CD4-positive, alpha-beta memory T cell (primary cell): ENCODE measurements at regions of chr5 and their contacts with region 1.

Region 1: DNA sequence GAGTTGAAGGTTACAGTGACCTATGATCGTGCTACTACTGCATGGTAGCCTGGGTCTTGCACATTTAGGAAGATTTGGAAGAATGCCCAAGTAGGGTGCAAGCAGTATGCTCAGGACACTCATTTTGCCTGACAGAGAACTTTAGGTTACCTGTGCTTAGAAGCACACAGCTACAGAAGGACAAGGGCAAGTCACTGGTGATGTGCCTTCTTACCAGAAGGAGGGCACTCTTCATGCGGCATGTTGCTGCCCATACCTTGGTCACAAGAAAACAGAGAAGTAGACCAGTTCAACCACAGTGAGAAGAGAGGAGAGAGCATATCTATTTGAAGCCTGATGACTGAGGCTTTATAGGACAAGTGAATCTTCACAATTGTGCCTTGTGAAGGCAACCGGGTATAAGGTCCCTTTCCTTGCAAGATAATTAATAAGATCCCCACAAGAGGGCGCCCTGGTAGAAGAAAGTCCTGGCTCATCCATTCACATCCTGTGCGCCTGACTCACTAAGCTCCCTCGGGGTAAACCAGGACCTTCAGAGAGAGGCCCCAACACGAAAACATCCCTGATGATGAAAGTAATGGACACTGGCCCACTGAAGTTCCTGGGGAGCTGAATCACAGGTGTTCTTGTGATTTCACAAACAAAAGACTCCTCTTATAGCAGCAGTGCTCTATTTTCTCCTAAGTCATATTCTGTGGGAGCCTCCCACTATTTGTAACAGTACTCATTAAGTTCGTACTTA is 38.1 kb upstream of the STARD4 start:
- DNase-seq: peak; percentile 57 to 67 (median 64)
- H3K4me3 ChIP-seq: no peak overlapping the region
- H3K4me3 Mint-ChIP-seq: peak overlapping the region in 2 of 8 donors; percentile 23 to 49
- H3K27ac ChIP-seq: no peak overlapping the region
- H3K27ac Mint-ChIP-seq: no peak overlapping the region
- H3K4me1 ChIP-seq: peaks cover 13% of the 10 kb centered on the region
- H3K4me1 Mint-ChIP-seq: peaks cover 10 to 25% (median 20%) of the 10 kb centered on the region in 4 donors
- H3K27me3 ChIP-seq: no peaks in the 10 kb centered on the region
- H3K27me3 Mint-ChIP-seq: peaks cover 1 to 3% of the 10 kb centered on the region in 2 donors

Region 2: DNA sequence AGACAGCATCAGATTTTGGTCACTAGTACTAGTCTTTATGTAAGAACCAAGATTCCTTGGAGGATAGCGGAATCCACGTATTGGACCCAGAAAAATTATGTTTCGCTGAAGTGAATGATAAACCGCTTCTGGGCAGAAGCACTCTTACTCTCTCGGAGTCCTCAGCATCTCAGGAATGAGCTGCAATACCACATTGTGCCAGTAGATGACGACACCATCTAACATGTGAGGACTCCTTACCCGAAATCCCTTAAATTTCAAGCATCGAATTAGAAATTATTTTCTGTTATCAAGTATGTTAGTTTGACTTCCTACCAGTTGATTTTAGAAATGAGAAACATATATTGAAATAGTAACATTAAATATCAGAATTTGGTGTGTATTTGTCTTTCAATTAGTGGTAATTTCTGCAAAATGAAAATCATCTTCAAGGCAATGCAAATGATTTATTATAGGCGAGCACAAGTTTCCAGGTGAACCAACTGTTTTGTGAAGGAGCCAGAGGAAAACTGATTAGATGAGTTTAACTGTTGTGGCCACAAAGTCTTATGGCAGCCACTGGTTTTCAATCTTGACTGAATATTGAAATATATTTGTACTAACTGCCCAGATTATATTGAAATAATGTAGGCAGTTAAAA is 392.2 kb before region 1 on chr5:
- CTCF ChIA-PET with region 1: interaction called, 3 read pairs
- POLR2A ChIA-PET with region 1: no interaction called
- intact Hi-C with region 1: loop called (anchors 5 kb)
- DNase-seq: peak; percentile 66 to 79 (median 72)
- H3K4me3 ChIP-seq: no peak overlapping the region
- H3K4me3 Mint-ChIP-seq: peak overlapping the region in 1 of 8 donors; percentile 15
- H3K27ac ChIP-seq: no peak overlapping the region
- H3K27ac Mint-ChIP-seq: no peak overlapping the region
- H3K4me1 ChIP-seq: no peaks in the 10 kb centered on the region
- H3K4me1 Mint-ChIP-seq: peaks cover 0 to 6% (median 3%) of the 10 kb centered on the region in 4 donors
- H3K27me3 ChIP-seq: no peaks in the 10 kb centered on the region
- H3K27me3 Mint-ChIP-seq: peaks cover 4 to 7% of the 10 kb centered on the region in 2 donors

Region 3: DNA sequence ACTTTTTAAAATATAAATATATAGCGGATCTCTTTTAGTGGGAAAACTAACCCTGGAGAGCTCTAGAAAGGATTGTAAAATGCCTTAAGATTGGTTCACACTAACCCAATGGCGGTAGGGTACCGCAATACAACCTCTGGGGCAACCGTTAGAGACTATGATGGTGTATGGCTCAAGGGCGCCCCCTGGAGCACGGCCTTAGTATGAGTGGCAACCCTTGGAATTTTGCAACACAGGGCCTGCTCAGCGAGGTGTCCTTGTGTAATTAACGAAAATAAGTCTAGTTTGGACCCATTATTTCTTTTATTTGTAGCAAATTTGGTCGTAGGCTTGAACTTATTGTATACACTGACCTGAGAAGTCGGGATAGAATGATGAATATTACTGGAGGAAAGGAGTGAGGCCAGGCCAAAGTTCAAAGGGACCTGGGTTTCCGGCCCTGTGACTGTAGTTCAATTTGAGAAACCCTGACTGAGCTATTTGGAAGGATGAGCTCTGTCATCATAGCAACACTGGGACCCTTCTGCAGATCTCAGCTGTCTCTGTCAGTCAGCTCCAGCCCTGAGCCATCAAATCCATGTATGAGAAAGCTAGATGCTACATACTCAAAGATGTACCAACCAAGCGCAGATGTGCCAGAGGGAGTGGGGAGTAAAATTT is 271.5 kb before region 1 on chr5:
- CTCF ChIA-PET with region 1: no interaction called
- POLR2A ChIA-PET with region 1: no interaction called
- intact Hi-C with region 1: no loop called
- DNase-seq: peak; percentile 77 to 84 (median 82)
- H3K4me3 ChIP-seq: no peak overlapping the region
- H3K4me3 Mint-ChIP-seq: peak overlapping the region in 3 of 8 donors; percentile 27 to 75 (median 63)
- H3K27ac ChIP-seq: no peak overlapping the region
- H3K27ac Mint-ChIP-seq: peak overlapping the region in 6 of 7 donors; percentile 53 to 94 (median 82)
- H3K4me1 ChIP-seq: peaks cover 57% of the 10 kb centered on the region
- H3K4me1 Mint-ChIP-seq: peaks cover 52 to 79% (median 64%) of the 10 kb centered on the region in 4 donors
- H3K27me3 ChIP-seq: no peaks in the 10 kb centered on the region
- H3K27me3 Mint-ChIP-seq: no peaks in the 10 kb centered on the region

Region 4: DNA sequence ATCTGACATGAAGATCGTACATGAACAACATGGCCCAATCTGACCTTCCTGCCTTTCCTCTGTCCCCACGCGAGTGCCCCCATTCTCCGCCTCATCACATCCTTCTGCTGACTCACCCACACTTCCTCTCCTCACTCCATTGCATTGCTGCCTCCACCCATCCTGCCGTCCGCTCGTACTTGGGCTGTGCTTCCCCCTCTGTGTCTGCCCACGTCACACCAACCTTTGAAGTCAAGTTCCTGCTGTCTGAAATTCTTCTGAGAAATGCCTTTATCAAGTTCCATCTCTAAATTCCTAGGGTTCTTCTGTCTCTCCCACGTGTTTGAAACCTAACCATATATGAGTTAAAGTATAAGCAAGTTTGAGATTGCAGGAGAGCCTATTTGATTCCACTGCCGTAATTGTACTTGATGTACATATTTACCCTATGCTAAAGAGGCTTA is 20.1 kb before region 1 on chr5:
- CTCF ChIA-PET with region 1: interaction called, 19 read pairs
- POLR2A ChIA-PET with region 1: no interaction called
- intact Hi-C with region 1: no loop called
- DNase-seq: peak; percentile 84 to 98 (median 87)
- H3K4me3 ChIP-seq: peak overlapping the region in 1 of 2 donors; percentile 3
- H3K4me3 Mint-ChIP-seq: peak overlapping the region; percentile 31 to 79 (median 66)
- H3K27ac ChIP-seq: peak overlapping the region; percentile 68
- H3K27ac Mint-ChIP-seq: peak overlapping the region; percentile 76 to 98 (median 89)
- H3K4me1 ChIP-seq: peaks cover 18% of the 10 kb centered on the region
- H3K4me1 Mint-ChIP-seq: peaks cover 13 to 17% (median 15%) of the 10 kb centered on the region in 4 donors
- H3K27me3 ChIP-seq: no peaks in the 10 kb centered on the region
- H3K27me3 Mint-ChIP-seq: peaks cover 0 to 1% of the 10 kb centered on the region in 2 donors

Region 5: GRCh38 chr5:111537141-111538024 is 13.1 kb before region 1 on chr5:
- CTCF ChIA-PET with region 1: interaction called, 19 read pairs
- POLR2A ChIA-PET with region 1: no interaction called
- intact Hi-C with region 1: no loop called
- DNase-seq: no peak
- H3K4me3 ChIP-seq: no peak overlapping the region
- H3K4me3 Mint-ChIP-seq: no peak overlapping the region
- H3K27ac ChIP-seq: no peak overlapping the region
- H3K27ac Mint-ChIP-seq: no peak overlapping the region
- H3K4me1 ChIP-seq: no peaks in the 10 kb centered on the region
- H3K4me1 Mint-ChIP-seq: no peaks in the 10 kb centered on the region
- H3K27me3 ChIP-seq: no peaks in the 10 kb centered on the region
- H3K27me3 Mint-ChIP-seq: peaks cover 10 to 17% of the 10 kb centered on the region in 2 donors

Region 6: DNA sequence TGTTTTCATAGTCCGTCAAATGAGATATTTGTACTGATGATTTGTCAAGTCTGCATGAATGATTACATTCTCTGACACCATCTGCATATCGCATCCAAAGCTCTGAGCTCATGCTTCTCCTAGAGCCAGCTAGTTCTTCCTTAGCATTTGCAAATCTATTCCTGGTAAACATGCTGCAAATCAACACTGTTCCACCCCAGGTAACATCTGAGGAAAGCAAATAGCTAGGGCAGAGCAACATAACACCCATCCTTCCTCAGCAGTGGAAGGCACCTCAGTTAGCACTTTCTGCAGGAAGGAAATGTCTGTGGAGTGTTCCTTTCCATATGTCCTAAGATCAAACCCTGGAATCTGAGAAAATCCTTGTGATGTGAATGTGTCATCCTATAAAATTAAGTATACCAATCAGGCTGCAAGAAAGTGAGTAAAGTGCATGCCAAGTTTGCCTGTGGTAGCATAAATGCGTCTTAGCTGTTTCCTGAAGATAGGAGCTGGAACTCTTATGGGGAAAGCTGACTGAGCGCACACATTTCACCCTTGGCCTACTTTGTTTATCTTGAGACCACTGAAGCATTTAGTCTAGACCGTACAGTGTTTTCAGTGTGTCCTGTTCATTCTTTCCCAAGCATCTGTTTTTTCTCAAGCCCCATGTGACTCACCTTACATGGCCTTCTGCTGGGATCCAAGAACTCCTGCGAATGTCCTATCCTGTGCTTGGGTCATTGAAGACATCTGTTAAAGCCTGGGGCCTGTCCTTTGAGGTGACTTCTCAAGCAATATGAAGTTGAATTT is 12.8 kb after region 1 on chr5:
- CTCF ChIA-PET with region 1: interaction called, 15 read pairs
- POLR2A ChIA-PET with region 1: no interaction called
- intact Hi-C with region 1: no loop called
- DNase-seq: no peak
- H3K4me3 ChIP-seq: no peak overlapping the region
- H3K4me3 Mint-ChIP-seq: no peak overlapping the region
- H3K27ac ChIP-seq: no peak overlapping the region
- H3K27ac Mint-ChIP-seq: no peak overlapping the region
- H3K4me1 ChIP-seq: no peaks in the 10 kb centered on the region
- H3K4me1 Mint-ChIP-seq: no peaks in the 10 kb centered on the region
- H3K27me3 ChIP-seq: peaks cover 12% of the 10 kb centered on the region
- H3K27me3 Mint-ChIP-seq: peaks cover 6 to 11% of the 10 kb centered on the region in 2 donors

Region 7: DNA sequence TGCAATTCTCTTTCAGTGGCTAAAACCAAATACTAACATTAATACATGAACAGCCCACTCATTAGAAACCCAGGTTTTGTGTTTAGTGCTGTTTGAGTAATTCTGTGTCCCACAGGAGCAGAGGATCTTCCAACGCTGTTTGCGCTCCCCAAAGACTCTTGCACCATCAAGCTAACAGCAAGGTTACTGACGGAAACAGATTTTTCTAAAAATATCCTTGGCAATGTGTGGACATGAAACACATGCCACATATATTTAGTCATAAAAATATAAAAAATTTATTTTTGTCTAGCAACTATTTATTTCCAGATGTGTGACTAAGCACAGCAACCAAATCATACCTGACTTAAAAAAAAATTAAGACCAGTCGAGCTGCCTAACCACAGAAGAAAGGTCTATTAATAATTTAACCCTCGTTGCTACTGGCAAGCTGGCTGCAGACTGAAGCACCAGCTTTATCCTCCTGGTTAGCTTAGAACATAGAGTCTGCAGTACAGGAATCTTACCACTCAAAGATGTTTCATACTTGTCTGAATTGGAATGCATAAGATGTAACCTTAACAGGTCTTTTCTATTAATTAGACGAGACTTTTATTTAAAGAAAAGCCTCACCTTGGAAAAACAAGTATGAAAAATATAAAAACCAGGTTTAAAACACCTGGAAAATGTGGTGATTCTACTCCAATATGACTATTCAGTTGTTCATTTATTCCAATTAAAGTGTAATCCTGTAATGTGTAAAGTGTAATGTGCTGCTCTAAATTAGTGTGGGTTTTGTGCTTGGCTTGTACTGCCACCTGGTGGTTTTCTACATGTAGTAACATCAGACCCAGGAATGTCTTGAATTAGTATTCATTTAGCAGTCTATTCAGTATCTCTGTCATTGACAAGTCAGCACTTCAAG is 596.1 kb after region 1 on chr5:
- CTCF ChIA-PET with region 1: interaction called, 21 read pairs
- POLR2A ChIA-PET with region 1: no interaction called
- intact Hi-C with region 1: loop called (anchors 1 kb)
- DNase-seq: peak; percentile 57 to 66 (median 58)
- H3K4me3 ChIP-seq: no peak overlapping the region
- H3K4me3 Mint-ChIP-seq: no peak overlapping the region
- H3K27ac ChIP-seq: no peak overlapping the region
- H3K27ac Mint-ChIP-seq: no peak overlapping the region
- H3K4me1 ChIP-seq: no peaks in the 10 kb centered on the region
- H3K4me1 Mint-ChIP-seq: no peaks in the 10 kb centered on the region
- H3K27me3 ChIP-seq: no peaks in the 10 kb centered on the region
- H3K27me3 Mint-ChIP-seq: peaks cover 12 to 20% of the 10 kb centered on the region in 2 donors